B cell (primary cell): ENCODE measurements at regions of chr20 and their contacts with region 1.

Region 1: DNA sequence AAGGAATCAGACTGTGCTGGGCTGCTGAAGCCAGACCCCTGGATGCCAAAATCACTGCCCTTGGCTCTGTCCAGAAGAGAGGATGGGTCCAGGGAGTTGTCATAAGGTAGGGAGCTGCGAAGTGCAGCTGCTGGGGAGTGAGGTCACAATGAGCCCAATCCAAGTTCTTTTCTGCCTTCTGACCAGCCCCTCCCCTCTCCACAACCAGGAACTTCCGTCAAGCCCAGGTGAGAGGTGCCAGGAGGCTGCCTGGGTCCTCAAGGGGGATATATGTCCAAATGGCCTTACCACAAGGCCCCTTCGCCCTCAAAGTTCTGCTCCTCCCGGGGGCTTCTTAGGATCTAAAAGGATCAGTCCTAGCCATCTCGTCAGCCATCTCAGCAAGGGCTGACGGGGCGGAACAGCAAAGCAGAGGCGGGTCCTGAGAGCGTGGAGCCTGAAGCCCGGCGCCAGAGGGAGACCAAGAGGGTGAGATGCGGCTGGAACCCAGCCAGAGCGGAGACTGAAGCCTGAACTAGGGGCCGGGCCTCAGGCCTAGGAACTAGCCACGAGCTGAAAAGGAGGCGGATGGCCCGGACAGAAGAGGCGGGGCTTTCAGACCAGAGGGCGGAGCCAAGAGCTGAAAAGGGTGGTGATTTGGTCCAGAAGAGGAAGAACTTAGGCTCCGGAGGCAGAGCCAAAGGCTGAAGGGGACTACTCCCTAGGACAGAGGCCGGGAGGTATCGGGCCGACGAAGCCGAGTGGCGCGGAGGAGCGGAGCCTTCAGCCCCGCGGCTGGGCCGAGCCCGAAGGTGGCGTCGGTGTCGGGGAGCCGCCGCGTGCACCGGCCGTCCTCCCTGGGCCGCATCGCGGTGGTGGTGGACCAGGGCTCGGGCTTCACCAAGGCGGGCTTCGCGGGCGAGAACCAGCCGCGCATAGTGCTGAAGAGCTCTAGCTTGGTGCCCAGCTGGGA is at the start of gene ACTL10:
- DNase-seq: peak; percentile 92
- ATAC-seq: peak; percentile 73
- H3K4me3 ChIP-seq: peak within 1 kb of the TSS; percentile 26 to 79 (median 68)
- H3K4me3 Mint-ChIP-seq: peak within 1 kb of the TSS; percentile 98
- H3K27ac ChIP-seq: peak within 1 kb of the TSS; percentile 55 to 59
- H3K27ac Mint-ChIP-seq: peak within 1 kb of the TSS; percentile 96
- H3K4me1 ChIP-seq: peaks cover 18 to 44% of the 10 kb centered on the region in 2 donors
- H3K4me1 Mint-ChIP-seq: peaks cover 36% of the 10 kb centered on the region
- H3K27me3 ChIP-seq: no peaks in the 10 kb centered on the region
- H3K27me3 Mint-ChIP-seq: no peaks in the 10 kb centered on the region
- CTCF ChIP-seq: no peak
- total RNA-seq, gene ACTL10: 6.3 and 9.0 TPM in 2 replicates

Region 2: DNA sequence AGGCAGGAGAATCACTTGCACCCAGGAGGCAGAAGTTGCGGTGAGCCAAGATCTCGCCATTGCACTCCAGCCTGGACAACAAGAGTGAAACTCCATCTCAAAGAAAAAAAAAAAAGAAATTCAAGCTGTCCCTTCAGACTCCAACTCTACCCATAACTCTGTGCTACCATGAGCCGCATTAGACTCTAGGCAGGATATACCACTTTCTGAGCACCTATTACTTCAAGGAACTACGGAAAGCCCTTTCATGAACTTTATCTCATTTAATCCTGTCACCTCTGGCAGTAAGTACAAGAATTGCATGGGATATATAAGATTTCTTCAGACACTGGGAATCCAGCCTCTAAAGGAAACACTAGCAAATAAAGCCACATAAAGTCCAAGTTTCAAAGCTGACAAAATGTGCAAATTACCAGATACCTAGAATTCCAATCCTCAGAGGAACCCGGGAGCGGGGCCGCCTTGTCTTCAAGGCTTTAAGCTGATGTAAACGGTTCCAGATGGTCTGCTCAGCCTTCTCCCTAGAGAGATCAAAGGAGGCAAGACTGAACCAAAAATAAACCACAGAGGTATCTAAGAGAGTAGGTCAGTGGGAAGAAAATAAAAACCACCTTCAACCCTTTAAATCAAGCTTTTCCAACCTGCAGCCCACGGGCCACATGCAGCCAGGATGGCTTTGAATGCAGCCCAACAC is 274.7 kb before region 1 on chr20:
- CTCF ChIA-PET with region 1: interaction called, 17 read pairs
- POLR2A ChIA-PET with region 1: no interaction called
- intact Hi-C with region 1: no loop called
- DNase-seq: no peak
- ATAC-seq: no peak
- H3K4me3 ChIP-seq: no peak overlapping the region
- H3K4me3 Mint-ChIP-seq: no peak overlapping the region
- H3K27ac ChIP-seq: no peak overlapping the region
- H3K27ac Mint-ChIP-seq: no peak overlapping the region
- H3K4me1 ChIP-seq: no peaks in the 10 kb centered on the region
- H3K4me1 Mint-ChIP-seq: peaks cover 18% of the 10 kb centered on the region
- H3K27me3 ChIP-seq: no peaks in the 10 kb centered on the region
- H3K27me3 Mint-ChIP-seq: no peaks in the 10 kb centered on the region
- CTCF ChIP-seq: no peak

Region 3: DNA sequence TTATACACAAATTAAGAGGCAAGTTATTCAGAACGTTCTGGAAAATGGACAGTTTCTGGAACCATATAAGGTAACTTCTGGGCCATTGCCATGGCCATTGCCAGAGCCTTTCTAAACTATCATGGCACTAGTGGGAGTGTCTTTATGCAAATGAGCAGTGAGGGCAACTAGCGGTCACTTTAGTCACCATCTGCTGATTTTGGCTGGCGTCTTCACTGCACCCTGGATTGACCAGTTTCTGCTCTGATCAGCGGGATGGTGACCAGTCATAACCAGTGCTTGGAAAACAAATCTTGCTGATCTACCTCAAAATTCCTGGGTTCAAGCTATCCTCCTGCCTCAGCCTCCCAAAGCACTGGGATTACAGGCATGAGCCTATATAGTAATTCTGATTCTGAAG is 215.7 kb before region 1 on chr20:
- CTCF ChIA-PET with region 1: interaction called, 34 read pairs
- POLR2A ChIA-PET with region 1: no interaction called
- intact Hi-C with region 1: loop called (anchors 2 kb)
- DNase-seq: no peak
- ATAC-seq: no peak
- H3K4me3 ChIP-seq: no peak overlapping the region
- H3K4me3 Mint-ChIP-seq: no peak overlapping the region
- H3K27ac ChIP-seq: no peak overlapping the region
- H3K27ac Mint-ChIP-seq: no peak overlapping the region
- H3K4me1 ChIP-seq: no peaks in the 10 kb centered on the region
- H3K4me1 Mint-ChIP-seq: peaks cover under 1% of the 10 kb centered on the region
- H3K27me3 ChIP-seq: no peaks in the 10 kb centered on the region
- H3K27me3 Mint-ChIP-seq: no peaks in the 10 kb centered on the region
- CTCF ChIP-seq: no peak

Region 4: DNA sequence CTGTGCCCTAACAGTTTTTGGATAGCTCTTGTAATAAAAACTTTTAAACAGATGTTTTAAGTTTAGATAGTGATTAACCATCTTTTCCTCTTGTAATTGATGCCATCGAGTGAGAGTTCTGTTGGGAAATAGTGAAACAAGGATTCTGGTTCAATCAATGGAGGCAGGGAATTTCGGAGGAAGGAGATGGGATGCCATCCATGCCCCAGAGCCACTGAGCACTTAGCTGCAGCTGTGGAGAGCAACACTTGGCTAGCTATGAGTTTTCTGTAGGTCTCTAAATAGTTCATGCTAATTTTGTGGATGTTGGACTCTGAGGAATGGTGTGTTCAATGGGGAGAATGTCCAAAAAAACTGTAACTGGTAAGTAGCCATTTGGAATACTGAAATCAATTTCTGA is 160.0 kb before region 1 on chr20:
- CTCF ChIA-PET with region 1: interaction called, 10 read pairs
- POLR2A ChIA-PET with region 1: interaction called, 3 read pairs
- intact Hi-C with region 1: no loop called
- DNase-seq: no peak
- ATAC-seq: no peak
- H3K4me3 ChIP-seq: no peak overlapping the region
- H3K4me3 Mint-ChIP-seq: no peak overlapping the region
- H3K27ac ChIP-seq: no peak overlapping the region
- H3K27ac Mint-ChIP-seq: no peak overlapping the region
- H3K4me1 ChIP-seq: peaks cover 3 to 7% of the 10 kb centered on the region in 2 donors
- H3K4me1 Mint-ChIP-seq: peaks cover 27% of the 10 kb centered on the region
- H3K27me3 ChIP-seq: no peaks in the 10 kb centered on the region
- H3K27me3 Mint-ChIP-seq: no peaks in the 10 kb centered on the region
- CTCF ChIP-seq: no peak

Region 5: GRCh38 chr20:33653218-33653899 is 13.2 kb before region 1 on chr20:
- CTCF ChIA-PET with region 1: interaction called, 53 read pairs
- POLR2A ChIA-PET with region 1: no interaction called
- intact Hi-C with region 1: no loop called
- DNase-seq: peak; percentile 72
- ATAC-seq: peak; percentile 79
- H3K4me3 ChIP-seq: no peak overlapping the region
- H3K4me3 Mint-ChIP-seq: no peak overlapping the region
- H3K27ac ChIP-seq: no peak overlapping the region
- H3K27ac Mint-ChIP-seq: no peak overlapping the region
- H3K4me1 ChIP-seq: peaks cover 0 to 9% of the 10 kb centered on the region in 2 donors
- H3K4me1 Mint-ChIP-seq: peaks cover 5% of the 10 kb centered on the region
- H3K27me3 ChIP-seq: no peaks in the 10 kb centered on the region
- H3K27me3 Mint-ChIP-seq: no peaks in the 10 kb centered on the region
- CTCF ChIP-seq: peak; percentile 69

Region 6: GRCh38 chr20:33719989-33720709 is 53.6 kb after region 1 on chr20 and contains the start of gene PXMP4:
- CTCF ChIA-PET with region 1: interaction called, 8 read pairs
- POLR2A ChIA-PET with region 1: interaction called, 12 read pairs
- intact Hi-C with region 1: loop called (anchors 1 kb)
- DNase-seq: peak; percentile 93
- ATAC-seq: peak; percentile 97
- H3K4me3 ChIP-seq: peak within 1 kb of the TSS; percentile 36 to 90 (median 85)
- H3K4me3 Mint-ChIP-seq: peak within 1 kb of the TSS; percentile 90
- H3K27ac ChIP-seq: peak within 1 kb of the TSS; percentile 43 to 53
- H3K27ac Mint-ChIP-seq: peak within 1 kb of the TSS; percentile 85
- H3K4me1 ChIP-seq: peaks cover 8 to 16% of the 10 kb centered on the region in 2 donors
- H3K4me1 Mint-ChIP-seq: peaks cover 14% of the 10 kb centered on the region
- H3K27me3 ChIP-seq: no peaks in the 10 kb centered on the region
- H3K27me3 Mint-ChIP-seq: no peaks in the 10 kb centered on the region
- CTCF ChIP-seq: no peak
- total RNA-seq, gene PXMP4: 6.6 and 6.8 TPM in 2 replicates

Region 7: GRCh38 chr20:33992923-33993575 is 326.5 kb after region 1 on chr20:
- CTCF ChIA-PET with region 1: interaction called, 3 read pairs
- POLR2A ChIA-PET with region 1: interaction called, 6 read pairs
- intact Hi-C with region 1: loop called (anchors 5 kb)
- DNase-seq: peak; percentile 99
- ATAC-seq: peak; percentile 84
- H3K4me3 ChIP-seq: peak overlapping the region; percentile 94 to 99 (median 98)
- H3K4me3 Mint-ChIP-seq: peak overlapping the region; percentile 92
- H3K27ac ChIP-seq: peak overlapping the region; percentile 90 to 91
- H3K27ac Mint-ChIP-seq: peak overlapping the region; percentile 99
- H3K4me1 ChIP-seq: peaks cover 40 to 48% of the 10 kb centered on the region in 2 donors
- H3K4me1 Mint-ChIP-seq: peaks cover 59% of the 10 kb centered on the region
- H3K27me3 ChIP-seq: no peaks in the 10 kb centered on the region
- H3K27me3 Mint-ChIP-seq: no peaks in the 10 kb centered on the region
- CTCF ChIP-seq: no peak